OCI-LY7 (cell line): ENCODE measurements at regions of chr20 and their contacts with region 1.

Region 1: GRCh38 chr20:43456809-43457639 is 672 bp upstream of the SRSF6 start:
- DNase-seq: peak; percentile 93
- H3K4me3 ChIP-seq: peak overlapping the region; percentile 99
- H3K27ac ChIP-seq: peak overlapping the region; percentile 88
- H3K4me1 ChIP-seq: peaks cover 16% of the 10 kb centered on the region
- CTCF ChIP-seq: no peak

Region 2: GRCh38 chr20:41693136-41693979 is 1763.7 kb before region 1 on chr20:
- CTCF ChIA-PET with region 1: no interaction called
- POLR2A ChIA-PET with region 1: no interaction called
- intact Hi-C with region 1: loop called (anchors 5 kb)
- DNase-seq: peak; percentile 96
- H3K4me3 ChIP-seq: peak overlapping the region; percentile 79
- H3K27ac ChIP-seq: peak overlapping the region; percentile 92
- H3K4me1 ChIP-seq: peaks cover 16% of the 10 kb centered on the region
- CTCF ChIP-seq: peak; percentile 85

Region 3: DNA sequence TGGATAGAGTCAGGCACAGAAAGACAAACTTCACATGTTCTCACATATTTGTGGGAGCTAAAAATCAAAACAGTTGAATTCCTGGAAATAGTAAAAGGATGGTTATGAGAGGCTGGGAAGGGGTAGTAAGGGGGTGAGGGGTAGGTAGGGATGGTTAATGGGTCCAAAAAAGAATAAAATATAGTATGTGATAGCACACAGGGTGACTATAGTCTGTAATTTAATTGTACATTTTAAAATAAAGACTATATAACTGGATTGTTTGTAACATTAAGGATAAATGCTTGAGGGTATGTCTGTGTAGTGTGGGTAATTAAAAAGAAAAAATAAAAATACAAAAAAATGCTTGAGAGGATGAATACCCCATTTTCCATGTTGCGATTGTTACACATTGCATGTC is 10.6 kb after region 1 on chr20:
- CTCF ChIA-PET with region 1: no interaction called
- POLR2A ChIA-PET with region 1: interaction called, 15 read pairs
- intact Hi-C with region 1: no loop called
- DNase-seq: no peak
- H3K4me3 ChIP-seq: no peak overlapping the region
- H3K27ac ChIP-seq: no peak overlapping the region
- H3K4me1 ChIP-seq: no peaks in the 10 kb centered on the region
- CTCF ChIP-seq: no peak

Region 4: GRCh38 chr20:43514062-43514999 is 57.3 kb after region 1 on chr20:
- CTCF ChIA-PET with region 1: no interaction called
- POLR2A ChIA-PET with region 1: interaction called, 13 read pairs
- intact Hi-C with region 1: loop called (anchors 2 kb)
- DNase-seq: peak; percentile 99
- H3K4me3 ChIP-seq: peak overlapping the region; percentile 79
- H3K27ac ChIP-seq: peak overlapping the region; percentile 47
- H3K4me1 ChIP-seq: peaks cover 14% of the 10 kb centered on the region
- CTCF ChIP-seq: peak; percentile 60

Region 5: GRCh38 chr20:43681468-43681942 is 224.5 kb after region 1 on chr20:
- CTCF ChIA-PET with region 1: no interaction called
- POLR2A ChIA-PET with region 1: no interaction called
- intact Hi-C with region 1: loop called (anchors 5 kb)
- DNase-seq: peak; percentile 82
- H3K4me3 ChIP-seq: peak overlapping the region; percentile 59
- H3K27ac ChIP-seq: peak overlapping the region; percentile 97
- H3K4me1 ChIP-seq: peaks cover 76% of the 10 kb centered on the region
- CTCF ChIP-seq: peak; percentile 61

Region 6: DNA sequence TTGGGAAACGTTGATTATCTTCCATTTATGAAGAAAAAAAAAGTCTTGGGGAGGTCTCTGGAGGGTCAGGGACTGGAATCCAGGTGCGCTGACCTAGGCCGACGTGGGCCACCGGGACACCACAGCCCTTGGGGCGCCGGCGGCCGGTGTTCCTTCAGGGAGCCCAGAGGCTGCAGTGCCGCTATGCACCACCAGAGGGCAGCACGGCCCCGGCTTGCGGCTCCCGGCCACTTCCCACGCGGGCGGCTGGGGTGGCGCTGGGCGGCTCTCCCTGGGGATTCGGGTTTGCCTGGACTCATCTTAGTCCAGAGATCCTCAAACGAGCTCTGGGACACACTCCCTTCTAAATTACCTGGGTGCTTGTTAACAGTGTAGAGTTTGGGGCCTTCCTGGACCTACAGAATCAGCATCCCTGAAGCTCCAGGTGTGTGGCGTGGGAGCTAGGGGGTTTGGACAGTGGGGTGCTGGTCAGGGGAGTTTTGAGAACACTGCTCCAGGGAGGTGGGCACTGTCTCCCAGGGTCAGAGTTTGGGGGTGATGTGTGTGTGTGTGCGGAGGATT is 292.8 kb after region 1 on chr20:
- CTCF ChIA-PET with region 1: no interaction called
- POLR2A ChIA-PET with region 1: interaction called, 3 read pairs
- intact Hi-C with region 1: loop called (anchors 5 kb)
- DNase-seq: peak; percentile 73
- H3K4me3 ChIP-seq: no peak overlapping the region
- H3K27ac ChIP-seq: no peak overlapping the region
- H3K4me1 ChIP-seq: peaks cover 51% of the 10 kb centered on the region
- CTCF ChIP-seq: peak; percentile 98